CD4-positive, alpha-beta T cell (primary cell): ENCODE measurements at regions of chr12 and their contacts with region 1.

Region 1: DNA sequence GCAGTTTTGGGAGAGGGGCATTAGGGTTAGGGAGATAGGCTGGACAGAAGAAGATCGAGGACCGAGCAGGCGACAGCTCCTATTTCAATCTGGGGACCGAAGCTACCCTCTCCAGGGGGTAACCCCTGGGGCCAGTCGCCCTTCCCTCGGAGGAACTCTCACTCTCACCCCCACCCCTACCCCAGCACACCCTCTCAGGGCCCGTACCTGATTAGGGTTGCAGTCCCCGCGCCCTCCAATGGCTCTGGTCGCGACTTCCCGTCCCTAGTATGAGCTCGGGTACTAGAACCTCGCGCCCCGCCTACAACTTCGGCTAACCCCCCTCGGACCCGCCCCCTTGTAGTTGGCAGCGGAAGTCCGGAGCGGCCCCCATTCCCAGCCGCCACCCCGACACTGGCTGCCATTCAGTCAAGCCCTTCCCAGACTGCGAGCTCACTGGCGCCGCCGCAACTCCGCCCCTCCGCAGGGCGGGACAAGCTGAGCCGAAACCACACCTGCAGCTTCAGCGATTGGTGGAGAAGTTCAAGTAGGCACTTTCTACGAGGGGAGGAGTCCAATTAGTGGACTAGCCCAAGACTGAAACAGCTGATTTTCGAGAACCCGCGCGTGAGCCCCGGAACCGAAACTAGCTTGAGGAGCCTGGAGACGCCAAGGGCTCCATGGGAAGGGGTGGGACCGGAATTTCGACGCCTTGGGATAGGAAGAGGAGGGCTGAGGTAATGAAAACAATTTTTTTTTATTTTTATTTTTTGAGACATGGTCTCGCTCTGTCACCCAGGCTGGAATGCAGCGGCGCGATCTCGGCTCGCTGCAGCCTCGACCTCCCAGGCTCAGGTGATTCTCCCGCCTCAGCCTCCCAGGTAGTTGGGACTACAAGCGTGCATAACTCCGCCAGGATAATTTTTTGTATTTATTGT is at the start of gene STAT2:
- DNase-seq: peak; percentile 97 to 100 (median 99)
- ATAC-seq: peak; percentile 94
- H3K4me3 ChIP-seq: peak within 1 kb of the TSS; percentile 90
- H3K4me3 Mint-ChIP-seq: peak within 1 kb of the TSS; percentile 99
- H3K27ac ChIP-seq: peak within 1 kb of the TSS; percentile 54 to 79
- H3K27ac Mint-ChIP-seq: peak within 1 kb of the TSS; percentile 93
- H3K4me1 ChIP-seq: peaks cover 27% of the 10 kb centered on the region
- H3K4me1 Mint-ChIP-seq: peaks cover 33% of the 10 kb centered on the region
- H3K27me3 ChIP-seq: no peaks in the 10 kb centered on the region
- H3K27me3 Mint-ChIP-seq: no peaks in the 10 kb centered on the region
- CTCF ChIP-seq: no peak
- total RNA-seq, gene STAT2: 114 to 125 TPM

Region 2: DNA sequence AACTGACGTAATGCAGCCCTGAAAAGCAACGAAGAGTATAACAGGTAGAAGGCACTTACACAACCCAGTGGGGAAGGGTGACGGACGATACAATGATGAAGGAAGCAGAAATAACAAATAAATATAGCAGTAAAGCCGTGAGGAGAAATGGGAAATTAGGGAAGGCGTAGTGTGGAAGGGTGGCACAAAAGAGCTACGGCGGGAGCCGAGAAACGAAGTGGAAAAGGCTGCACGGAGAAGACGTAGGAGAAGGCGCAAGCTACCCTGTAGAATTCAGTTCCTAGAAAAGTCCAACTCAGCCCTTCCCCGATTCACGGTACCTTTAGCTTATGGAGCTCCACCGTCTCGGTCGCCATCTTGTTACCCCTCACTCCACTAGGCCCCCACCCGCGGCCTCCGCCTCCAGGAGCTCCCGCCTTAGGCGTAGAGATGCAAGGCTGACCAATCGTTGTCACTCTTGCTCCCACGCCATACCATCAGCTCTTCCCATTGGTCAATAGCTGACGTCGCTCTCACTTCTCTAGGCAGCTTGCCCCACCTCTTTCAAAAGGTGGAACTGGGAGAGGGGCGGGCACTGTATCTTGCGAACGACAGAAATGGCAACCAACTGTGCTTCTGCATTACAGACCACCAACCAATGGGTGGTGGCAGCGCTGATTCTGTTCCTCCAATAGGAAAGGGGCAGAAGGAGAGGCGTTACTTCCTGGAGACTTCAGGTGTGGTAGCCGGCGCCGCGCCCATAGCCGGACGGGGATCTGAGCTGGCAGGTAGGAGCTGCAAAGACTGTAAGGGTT is 542.6 kb before region 1 on chr12 and contains the starts of genes ORMDL2 and SARNP:
- CTCF ChIA-PET with region 1: no interaction called
- POLR2A ChIA-PET with region 1: interaction called, 13 read pairs
- intact Hi-C with region 1: no loop called
- DNase-seq: peak; percentile 88 to 100 (median 92)
- ATAC-seq: peak; percentile 92
- H3K4me3 ChIP-seq: peak within 1 kb of the TSS; percentile 97
- H3K4me3 Mint-ChIP-seq: no peak within 1 kb of the TSS
- H3K27ac ChIP-seq: peak within 1 kb of the TSS; percentile 71 to 87
- H3K27ac Mint-ChIP-seq: no peak within 1 kb of the TSS
- H3K4me1 ChIP-seq: peaks cover 40% of the 10 kb centered on the region
- H3K4me1 Mint-ChIP-seq: peaks cover 28% of the 10 kb centered on the region
- H3K27me3 ChIP-seq: no peaks in the 10 kb centered on the region
- H3K27me3 Mint-ChIP-seq: no peaks in the 10 kb centered on the region
- CTCF ChIP-seq: no peak
- total RNA-seq, gene ORMDL2: 13.0 to 14.9 TPM
- total RNA-seq, gene SARNP: 38.2 to 38.6 TPM

Region 3: GRCh38 chr12:56224102-56224701 is 135.9 kb before region 1 on chr12 and contains the start of gene NABP2:
- CTCF ChIA-PET with region 1: no interaction called
- POLR2A ChIA-PET with region 1: interaction called, 15 read pairs
- intact Hi-C with region 1: no loop called
- DNase-seq: peak; percentile 73 to 96 (median 88)
- ATAC-seq: peak; percentile 66
- H3K4me3 ChIP-seq: peak within 1 kb of the TSS; percentile 70
- H3K4me3 Mint-ChIP-seq: peak within 1 kb of the TSS; percentile 98
- H3K27ac ChIP-seq: peak within 1 kb of the TSS; percentile 60 to 81
- H3K27ac Mint-ChIP-seq: peak within 1 kb of the TSS; percentile 100
- H3K4me1 ChIP-seq: peaks cover 56% of the 10 kb centered on the region
- H3K4me1 Mint-ChIP-seq: peaks cover 48% of the 10 kb centered on the region
- H3K27me3 ChIP-seq: no peaks in the 10 kb centered on the region
- H3K27me3 Mint-ChIP-seq: no peaks in the 10 kb centered on the region
- CTCF ChIP-seq: peak; percentile 88
- total RNA-seq, gene NABP2: 7.6 to 9.1 TPM

Region 4: DNA sequence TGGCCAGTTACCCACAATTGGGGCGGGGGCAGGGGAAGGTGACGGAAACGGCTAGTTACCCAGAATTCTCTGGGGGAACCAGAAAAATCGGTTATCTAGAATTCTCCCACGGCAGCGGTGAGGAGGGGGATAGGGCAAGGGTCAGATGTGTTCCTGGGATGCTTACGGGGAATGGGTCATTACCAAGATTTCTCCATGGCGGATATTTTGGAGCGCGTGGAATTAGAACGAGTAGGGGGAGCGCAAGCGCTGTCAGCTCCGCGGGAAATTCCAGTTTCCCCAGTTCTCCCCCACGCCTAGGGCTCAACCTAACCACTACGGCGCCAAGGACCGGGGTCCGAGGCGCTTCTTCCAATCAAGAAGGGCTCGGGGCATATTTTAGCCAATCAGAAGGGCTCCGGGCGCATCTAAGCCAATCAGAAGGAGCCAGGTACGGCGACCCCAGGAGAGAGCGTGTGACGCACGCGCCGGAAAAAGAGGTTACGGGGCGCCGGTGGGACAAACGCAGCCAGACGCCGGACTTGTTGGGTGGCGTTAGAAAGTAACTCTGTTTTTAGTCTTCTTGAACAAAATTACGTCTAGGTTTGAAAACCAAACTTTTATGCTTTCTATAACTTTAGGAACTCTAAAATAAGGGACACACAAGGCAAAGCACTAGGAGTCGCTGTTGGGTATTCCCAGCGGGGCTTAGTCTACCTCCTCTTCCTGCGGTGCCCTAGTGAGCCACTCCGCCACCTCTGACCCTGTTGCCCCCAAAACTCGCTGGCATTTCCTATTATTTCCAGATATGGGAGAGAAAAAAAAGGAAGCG is 26.2 kb before region 1 on chr12 and contains the start of gene PAN2:
- CTCF ChIA-PET with region 1: interaction called, 10 read pairs
- POLR2A ChIA-PET with region 1: interaction called, 150 read pairs
- intact Hi-C with region 1: loop called (anchors 1 kb)
- DNase-seq: peak; percentile 84 to 98 (median 89)
- ATAC-seq: peak; percentile 74
- H3K4me3 ChIP-seq: peak within 1 kb of the TSS; percentile 71
- H3K4me3 Mint-ChIP-seq: peak within 1 kb of the TSS; percentile 94
- H3K27ac ChIP-seq: peak within 1 kb of the TSS; percentile 99 to 100
- H3K27ac Mint-ChIP-seq: peak within 1 kb of the TSS; percentile 100
- H3K4me1 ChIP-seq: peaks cover 32% of the 10 kb centered on the region
- H3K4me1 Mint-ChIP-seq: peaks cover 56% of the 10 kb centered on the region
- H3K27me3 ChIP-seq: no peaks in the 10 kb centered on the region
- H3K27me3 Mint-ChIP-seq: no peaks in the 10 kb centered on the region
- CTCF ChIP-seq: peak; percentile 73
- total RNA-seq, gene PAN2: 104 to 107 TPM

Region 5: GRCh38 chr12:56425193-56425592 is 65.1 kb after region 1 on chr12:
- CTCF ChIA-PET with region 1: no interaction called
- POLR2A ChIA-PET with region 1: interaction called, 18 read pairs
- intact Hi-C with region 1: no loop called
- DNase-seq: peak in 2 of 14 experiments; percentile 8 to 18
- ATAC-seq: peak; percentile 89
- H3K4me3 ChIP-seq: no peak overlapping the region
- H3K4me3 Mint-ChIP-seq: peak overlapping the region; percentile 59
- H3K27ac ChIP-seq: peak overlapping the region in 1 of 2 donors; percentile 40
- H3K27ac Mint-ChIP-seq: peak overlapping the region; percentile 56
- H3K4me1 ChIP-seq: peaks cover 13% of the 10 kb centered on the region
- H3K4me1 Mint-ChIP-seq: peaks cover 14% of the 10 kb centered on the region
- H3K27me3 ChIP-seq: no peaks in the 10 kb centered on the region
- H3K27me3 Mint-ChIP-seq: no peaks in the 10 kb centered on the region
- CTCF ChIP-seq: peak; percentile 33

Region 6: DNA sequence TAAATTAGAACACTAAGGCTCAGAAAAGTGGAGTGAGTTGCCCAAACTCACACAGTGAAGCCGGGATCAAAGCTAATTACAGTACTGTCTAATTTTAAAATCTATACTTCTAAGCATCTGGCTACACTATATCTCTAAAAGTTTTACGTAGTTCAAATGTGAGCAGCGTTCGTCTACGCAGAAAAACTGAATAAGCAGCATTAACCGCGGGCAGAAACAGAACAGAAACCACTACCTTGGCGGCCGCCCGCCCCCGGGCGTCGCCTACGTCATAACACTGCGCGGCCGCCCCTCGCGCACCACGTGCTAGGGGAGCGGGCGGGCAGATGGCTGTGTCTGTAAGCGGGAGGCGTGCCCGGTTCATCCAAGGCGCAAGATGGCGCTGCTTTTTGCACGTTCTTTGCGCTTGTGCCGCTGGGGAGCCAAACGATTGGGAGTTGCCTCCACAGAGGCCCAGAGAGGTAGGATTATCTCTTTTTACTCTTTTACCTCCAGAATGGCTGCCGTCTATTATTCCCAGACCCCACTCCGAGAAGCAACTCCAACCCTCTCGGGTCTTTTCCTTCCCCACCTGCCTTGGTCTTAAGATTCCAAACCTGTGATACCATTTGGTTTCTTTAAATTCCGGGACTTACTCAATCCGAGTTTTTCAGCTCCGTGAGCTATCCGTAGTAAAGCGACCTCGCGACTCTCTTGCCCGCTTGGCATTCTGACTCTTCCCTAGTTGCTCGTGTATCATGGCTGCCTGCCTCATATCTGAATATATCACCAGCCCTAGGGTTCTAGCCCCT is 108.3 kb after region 1 on chr12 and contains the start of gene SPRYD4:
- CTCF ChIA-PET with region 1: interaction called, 7 read pairs
- POLR2A ChIA-PET with region 1: interaction called, 20 read pairs
- intact Hi-C with region 1: loop called in 1 of 2 experiments (anchors 5 kb)
- DNase-seq: peak; percentile 88 to 98 (median 93)
- ATAC-seq: peak; percentile 90
- H3K4me3 ChIP-seq: peak within 1 kb of the TSS; percentile 87
- H3K4me3 Mint-ChIP-seq: peak within 1 kb of the TSS; percentile 96
- H3K27ac ChIP-seq: peak within 1 kb of the TSS; percentile 68 to 94
- H3K27ac Mint-ChIP-seq: peak within 1 kb of the TSS; percentile 97
- H3K4me1 ChIP-seq: peaks cover 29% of the 10 kb centered on the region
- H3K4me1 Mint-ChIP-seq: peaks cover 31% of the 10 kb centered on the region
- H3K27me3 ChIP-seq: no peaks in the 10 kb centered on the region
- H3K27me3 Mint-ChIP-seq: no peaks in the 10 kb centered on the region
- CTCF ChIP-seq: peak; percentile 34
- total RNA-seq, gene SPRYD4: 7.4 to 7.9 TPM

Region 7: DNA sequence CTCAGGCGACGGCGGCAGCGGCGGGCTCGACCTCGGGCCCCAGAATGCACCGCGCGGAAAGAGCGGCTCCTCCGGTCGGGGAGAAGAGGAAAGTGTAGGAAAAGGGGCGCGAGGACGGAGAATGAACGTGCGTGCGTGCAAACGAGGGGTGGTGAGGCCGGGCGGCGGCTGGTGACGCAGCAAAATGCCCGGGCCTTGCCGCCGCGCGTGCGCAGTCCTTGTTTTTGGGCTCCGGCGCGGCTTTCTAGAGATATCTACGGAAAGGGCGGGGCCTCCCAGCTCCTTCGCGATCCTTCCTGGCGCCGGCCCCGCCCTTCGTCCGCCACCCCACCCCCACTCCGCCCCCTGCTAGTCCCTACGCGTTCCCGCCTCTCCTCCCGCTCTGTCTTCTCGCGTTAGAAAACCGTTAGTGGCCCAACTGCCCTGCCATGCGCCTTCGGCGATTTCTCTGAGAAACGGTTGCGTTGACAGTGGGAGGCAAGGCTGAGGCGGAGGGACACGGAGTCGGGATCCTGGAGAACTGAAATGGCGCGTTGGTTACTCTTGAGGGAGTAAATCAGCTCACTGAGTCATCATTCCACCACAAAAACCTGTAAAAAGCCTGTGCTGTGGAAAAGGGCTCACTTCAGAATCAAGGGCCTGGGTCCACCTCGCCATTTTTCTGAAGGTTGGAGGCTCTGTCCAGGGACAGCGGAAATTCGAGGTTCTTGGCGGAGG is 328.2 kb after region 1 on chr12 and contains the start of gene PTGES3:
- CTCF ChIA-PET with region 1: no interaction called
- POLR2A ChIA-PET with region 1: interaction called, 11 read pairs
- intact Hi-C with region 1: no loop called
- DNase-seq: peak; percentile 93 to 100 (median 97)
- ATAC-seq: peak; percentile 73
- H3K4me3 ChIP-seq: peak within 1 kb of the TSS; percentile 96
- H3K4me3 Mint-ChIP-seq: peak within 1 kb of the TSS; percentile 100
- H3K27ac ChIP-seq: peak within 1 kb of the TSS; percentile 98 to 99
- H3K27ac Mint-ChIP-seq: peak within 1 kb of the TSS; percentile 96
- H3K4me1 ChIP-seq: peaks cover 39% of the 10 kb centered on the region
- H3K4me1 Mint-ChIP-seq: peaks cover 43% of the 10 kb centered on the region
- H3K27me3 ChIP-seq: no peaks in the 10 kb centered on the region
- H3K27me3 Mint-ChIP-seq: no peaks in the 10 kb centered on the region
- CTCF ChIP-seq: no peak
- total RNA-seq, gene PTGES3: 146 to 154 TPM